ENCODE measurements at regions of chr10 and their contacts with region 1.

Region 1: DNA sequence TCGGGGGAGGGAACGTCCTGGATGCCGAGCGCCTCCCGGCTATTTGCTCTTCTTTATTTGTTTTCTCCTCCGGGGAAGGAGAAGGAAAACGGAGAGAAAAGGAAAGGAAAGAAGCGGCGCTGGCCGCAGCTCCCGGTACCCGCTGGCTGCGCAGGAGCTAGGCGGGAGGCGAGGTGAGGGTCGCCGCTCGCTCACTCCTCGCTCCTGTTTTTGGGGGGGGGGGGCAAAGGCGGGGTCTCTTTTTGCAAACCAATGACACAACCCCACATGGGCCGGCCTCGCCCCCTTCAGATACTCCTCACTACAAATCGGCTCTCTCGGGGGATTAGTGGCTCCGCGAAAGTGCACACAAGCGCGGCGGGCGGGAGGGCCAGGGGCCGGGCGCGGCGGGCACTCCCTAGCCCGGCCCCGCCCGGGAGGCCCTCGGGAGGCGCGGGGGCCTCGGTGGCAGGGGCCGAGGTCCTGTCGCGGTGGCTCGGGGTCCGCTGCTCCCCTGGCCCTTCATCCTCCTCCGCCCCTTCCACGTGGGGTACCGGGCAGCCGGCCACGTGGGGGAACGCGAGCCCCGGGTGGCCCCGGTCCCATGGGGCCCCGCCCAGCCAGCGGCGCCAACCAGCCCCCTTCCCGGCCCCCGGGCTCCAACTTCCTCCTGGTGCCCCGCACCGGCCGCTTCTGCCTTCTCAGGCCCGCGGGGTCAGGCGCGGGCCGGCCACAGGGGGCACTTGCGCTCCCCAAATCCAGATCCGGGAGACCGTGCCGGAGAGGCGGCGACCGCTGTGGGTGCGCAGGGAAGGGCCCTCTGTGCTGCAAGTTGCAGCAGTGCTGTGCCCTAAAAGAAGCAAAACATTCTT is 718 bp upstream of the CTBP2 start:
- DNase-seq: peak; percentile 87
- H3K4me3 ChIP-seq: peak overlapping the region; percentile 92 to 96
- H3K27ac ChIP-seq: peak overlapping the region; percentile 96 to 99
- H3K4me1 ChIP-seq: no peaks in the 10 kb centered on the region
- H3K27me3 ChIP-seq: no peaks in the 10 kb centered on the region
- CTCF ChIP-seq: peak in 3 of 4 experiments; percentile 12 to 46 (median 43)
- POLR2A ChIP-seq: peak; percentile 55

Region 2: GRCh38 chr10:124486635-124487034 is 674.4 kb before region 1 on chr10:
- intact Hi-C with region 1: no loop called
- DNase-seq: no peak
- H3K4me3 ChIP-seq: no peak overlapping the region
- H3K27ac ChIP-seq: no peak overlapping the region
- H3K4me1 ChIP-seq: no peaks in the 10 kb centered on the region
- H3K27me3 ChIP-seq: no peaks in the 10 kb centered on the region
- CTCF ChIP-seq: no peak
- POLR2A ChIP-seq: no peak

Region 3: GRCh38 chr10:125060826-125061556 is 100.1 kb before region 1 on chr10:
- intact Hi-C with region 1: loop called (anchors 5 kb)
- DNase-seq: peak; percentile 94
- H3K4me3 ChIP-seq: peak overlapping the region in 1 of 2 donors; percentile 1
- H3K27ac ChIP-seq: peak overlapping the region; percentile 90 to 91
- H3K4me1 ChIP-seq: peaks cover 81% of the 10 kb centered on the region
- H3K27me3 ChIP-seq: no peaks in the 10 kb centered on the region
- CTCF ChIP-seq: peak; percentile 60 to 94 (median 90)
- POLR2A ChIP-seq: no peak

Region 4: GRCh38 chr10:125343118-125343925 is 182.2 kb after region 1 on chr10:
- intact Hi-C with region 1: loop called (anchors 10 kb)
- DNase-seq: no peak
- H3K4me3 ChIP-seq: no peak overlapping the region
- H3K27ac ChIP-seq: no peak overlapping the region
- H3K4me1 ChIP-seq: no peaks in the 10 kb centered on the region
- H3K27me3 ChIP-seq: no peaks in the 10 kb centered on the region
- CTCF ChIP-seq: peak in 2 of 4 experiments; percentile 21 to 31
- POLR2A ChIP-seq: no peak

Region 5: DNA sequence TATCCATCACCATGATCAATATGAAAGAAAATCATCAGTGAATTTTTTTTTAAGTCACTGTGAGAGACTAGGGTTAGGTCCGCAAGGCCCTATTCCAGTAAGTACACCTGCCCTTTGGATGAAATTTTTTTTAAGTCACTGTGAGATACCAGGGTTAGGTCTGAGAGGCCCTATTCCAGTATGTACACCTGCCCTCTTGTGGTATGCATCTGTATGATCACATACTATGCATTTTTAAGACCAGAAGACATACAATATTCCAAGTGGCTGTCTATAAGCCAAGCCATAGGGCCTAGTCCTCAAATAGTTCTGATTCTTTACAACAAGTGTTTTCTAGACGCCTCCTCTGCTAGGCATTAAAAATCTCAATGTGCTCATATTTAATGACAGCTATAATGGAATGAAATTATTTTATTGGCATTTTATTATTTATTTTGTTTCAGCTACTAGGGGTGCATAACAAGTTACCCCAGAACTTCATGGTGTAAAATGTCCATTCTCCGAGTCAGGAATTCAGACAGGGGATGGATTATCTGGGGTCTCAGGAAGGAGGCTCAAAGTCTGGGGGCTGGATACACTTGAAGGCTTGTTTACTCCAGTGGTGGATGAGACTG is 468.8 kb after region 1 on chr10:
- intact Hi-C with region 1: loop called (anchors 5 kb)
- DNase-seq: no peak
- H3K4me3 ChIP-seq: no peak overlapping the region
- H3K27ac ChIP-seq: no peak overlapping the region
- H3K4me1 ChIP-seq: no peaks in the 10 kb centered on the region
- H3K27me3 ChIP-seq: no peaks in the 10 kb centered on the region
- CTCF ChIP-seq: peak in 3 of 4 experiments; percentile 18 to 60 (median 39)
- POLR2A ChIP-seq: no peak

Region 6: GRCh38 chr10:125822878-125823662 is 662.0 kb after region 1 on chr10 and contains the starts of genes BCCIP and UROS:
- intact Hi-C with region 1: loop called (anchors 10 kb)
- DNase-seq: peak; percentile 81
- H3K4me3 ChIP-seq: peak within 1 kb of the TSS; percentile 83 to 86
- H3K27ac ChIP-seq: peak within 1 kb of the TSS; percentile 77 to 79
- H3K4me1 ChIP-seq: peaks cover 9% of the 10 kb centered on the region
- H3K27me3 ChIP-seq: no peaks in the 10 kb centered on the region
- CTCF ChIP-seq: peak in 1 of 4 experiments; percentile 30
- POLR2A ChIP-seq: peak; percentile 45
- total RNA-seq, gene BCCIP: 38.9 to 43.4 TPM
- total RNA-seq, gene UROS: 45.0 to 49.0 TPM

Measured in prostate gland (tissue), 2 donors.